ENCODE measurements at regions of chr12 and their contacts with region 1.

Region 1: GRCh38 chr12:80412369-80412953 is 31.6 kb upstream of the PTPRQ start:
- DNase-seq: no peak
- ATAC-seq: peak; percentile 86
- H3K4me3 ChIP-seq: no peak overlapping the region
- H3K27ac ChIP-seq: no peak overlapping the region
- H3K4me1 ChIP-seq: no peaks in the 10 kb centered on the region
- H3K27me3 ChIP-seq: no peaks in the 10 kb centered on the region

Region 2: DNA sequence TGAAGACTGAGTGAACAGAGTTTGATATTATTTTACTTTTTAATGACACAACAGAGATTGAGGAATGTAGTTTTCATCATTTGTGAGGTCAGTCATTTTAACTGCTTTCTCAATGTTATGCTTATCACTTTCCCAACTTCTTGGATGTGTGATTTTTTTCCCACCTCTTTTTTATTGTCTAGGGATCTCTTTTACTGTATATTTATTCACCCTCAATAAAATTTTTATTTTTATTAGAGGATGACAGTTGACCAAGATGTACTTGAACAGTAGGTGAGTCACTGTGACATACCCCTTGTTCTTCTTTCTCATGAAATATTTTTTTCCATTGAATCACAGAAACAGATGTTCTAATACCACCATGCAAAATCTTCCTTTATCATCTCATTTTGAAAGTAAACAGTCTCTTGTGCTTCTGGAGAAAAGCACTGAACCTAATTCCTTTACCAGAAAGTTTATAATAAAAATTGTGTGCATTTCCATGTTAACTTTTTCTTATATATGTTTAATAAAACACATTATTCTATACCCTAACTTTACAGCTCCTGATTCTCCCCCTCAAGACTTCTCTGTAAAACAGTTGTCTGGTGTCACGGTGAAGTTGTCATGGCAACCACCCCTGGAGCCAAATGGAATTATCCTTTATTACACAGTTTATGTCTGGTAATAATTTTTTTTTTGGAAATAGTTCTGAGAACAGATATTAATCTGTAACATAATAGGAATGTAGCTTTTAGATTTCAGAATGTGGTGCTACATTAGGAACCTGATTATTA is 97.5 kb after region 1 on chr12:
- intact Hi-C with region 1: no loop called
- DNase-seq: no peak
- ATAC-seq: no peak
- H3K4me3 ChIP-seq: no peak overlapping the region
- H3K27ac ChIP-seq: no peak overlapping the region
- H3K4me1 ChIP-seq: no peaks in the 10 kb centered on the region
- H3K27me3 ChIP-seq: no peaks in the 10 kb centered on the region

Region 3: GRCh38 chr12:80598004-80598606 is 185.6 kb after region 1 on chr12:
- intact Hi-C with region 1: loop called in 1 of 2 experiments (anchors 5 kb)
- DNase-seq: no peak
- ATAC-seq: no peak
- H3K4me3 ChIP-seq: no peak overlapping the region
- H3K27ac ChIP-seq: no peak overlapping the region
- H3K4me1 ChIP-seq: no peaks in the 10 kb centered on the region
- H3K27me3 ChIP-seq: no peaks in the 10 kb centered on the region

Region 4: GRCh38 chr12:80763874-80764273 is 351.4 kb after region 1 on chr12:
- intact Hi-C with region 1: loop called (anchors 5 kb)
- DNase-seq: no peak
- ATAC-seq: no peak
- H3K4me3 ChIP-seq: no peak overlapping the region
- H3K27ac ChIP-seq: no peak overlapping the region
- H3K4me1 ChIP-seq: no peaks in the 10 kb centered on the region
- H3K27me3 ChIP-seq: no peaks in the 10 kb centered on the region

Region 5: GRCh38 chr12:80857311-80857710 is 444.9 kb after region 1 on chr12:
- intact Hi-C with region 1: no loop called
- DNase-seq: no peak
- ATAC-seq: no peak
- H3K4me3 ChIP-seq: no peak overlapping the region
- H3K27ac ChIP-seq: no peak overlapping the region
- H3K4me1 ChIP-seq: no peaks in the 10 kb centered on the region
- H3K27me3 ChIP-seq: no peaks in the 10 kb centered on the region

Measured in aorta (tissue), 5 donors.